Activated CD4-positive, alpha-beta T cell treated with anti-CD3 and anti-CD28 coated beads for 36 hours (primary cell): ENCODE measurements at regions of chr6 and their contacts with region 1.

Region 1: DNA sequence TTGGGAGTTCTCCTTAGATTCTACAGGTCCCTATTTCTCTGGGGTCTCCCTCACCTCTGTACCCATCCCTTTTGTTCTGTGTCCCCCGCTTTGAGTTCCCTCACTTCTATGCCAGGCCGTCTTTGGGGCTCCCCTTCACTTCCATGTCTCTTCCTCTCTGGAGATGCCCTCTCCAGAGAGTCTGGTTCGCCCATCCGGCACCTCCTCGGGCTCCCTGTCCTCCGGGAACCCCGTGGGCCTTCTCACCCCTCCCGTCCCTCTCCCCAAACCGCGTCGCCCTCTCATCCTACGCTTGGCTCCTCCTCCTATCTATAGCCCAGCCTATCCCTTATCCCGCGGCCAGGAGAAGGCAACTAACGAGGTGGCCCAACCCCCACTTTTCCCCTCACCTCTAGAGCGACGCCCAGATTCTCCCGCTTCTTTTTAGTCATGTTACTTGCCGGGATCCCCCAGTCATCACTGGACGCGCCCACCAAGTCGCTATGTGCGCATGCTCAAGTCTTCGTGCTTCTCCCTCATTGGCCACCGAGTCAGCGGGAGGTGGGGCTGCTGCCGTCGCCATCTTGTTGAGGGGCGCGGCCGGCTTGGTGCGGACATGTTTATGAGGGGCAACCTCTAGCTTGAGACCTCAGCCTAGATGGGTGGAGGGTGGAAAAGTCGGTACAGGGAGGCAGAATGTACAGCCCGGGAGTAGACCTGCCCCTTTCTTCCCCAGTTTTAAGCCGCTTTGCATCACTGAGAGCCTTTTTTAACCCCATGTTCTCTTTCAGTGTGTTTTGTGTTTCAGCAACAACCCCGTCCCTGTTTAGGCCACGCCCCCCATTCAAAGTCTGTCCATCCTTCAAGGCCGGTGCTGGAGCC is at the start of gene CCDC167:
- DNase-seq: peak; percentile 99
- ATAC-seq: peak; percentile 82
- H3K4me3 Mint-ChIP-seq: peak within 1 kb of the TSS; percentile 88
- H3K27ac Mint-ChIP-seq: peak within 1 kb of the TSS; percentile 96
- H3K4me1 Mint-ChIP-seq: peaks cover 89% of the 10 kb centered on the region
- H3K27me3 Mint-ChIP-seq: no peaks in the 10 kb centered on the region
- total RNA-seq, gene CCDC167: 55.3 to 60.3 TPM

Region 2: GRCh38 chr6:37029249-37029971 is 470.3 kb before region 1 on chr6:
- CTCF ChIA-PET with region 1: no interaction called
- POLR2A ChIA-PET with region 1: no interaction called
- intact Hi-C with region 1: loop called in 1 of 2 experiments (anchors 5 kb)
- DNase-seq: peak; percentile 68
- ATAC-seq: peak; percentile 17
- H3K4me3 Mint-ChIP-seq: no peak overlapping the region
- H3K27ac Mint-ChIP-seq: peak overlapping the region; percentile 60
- H3K4me1 Mint-ChIP-seq: peaks cover 54% of the 10 kb centered on the region
- H3K27me3 Mint-ChIP-seq: no peaks in the 10 kb centered on the region

Region 3: DNA sequence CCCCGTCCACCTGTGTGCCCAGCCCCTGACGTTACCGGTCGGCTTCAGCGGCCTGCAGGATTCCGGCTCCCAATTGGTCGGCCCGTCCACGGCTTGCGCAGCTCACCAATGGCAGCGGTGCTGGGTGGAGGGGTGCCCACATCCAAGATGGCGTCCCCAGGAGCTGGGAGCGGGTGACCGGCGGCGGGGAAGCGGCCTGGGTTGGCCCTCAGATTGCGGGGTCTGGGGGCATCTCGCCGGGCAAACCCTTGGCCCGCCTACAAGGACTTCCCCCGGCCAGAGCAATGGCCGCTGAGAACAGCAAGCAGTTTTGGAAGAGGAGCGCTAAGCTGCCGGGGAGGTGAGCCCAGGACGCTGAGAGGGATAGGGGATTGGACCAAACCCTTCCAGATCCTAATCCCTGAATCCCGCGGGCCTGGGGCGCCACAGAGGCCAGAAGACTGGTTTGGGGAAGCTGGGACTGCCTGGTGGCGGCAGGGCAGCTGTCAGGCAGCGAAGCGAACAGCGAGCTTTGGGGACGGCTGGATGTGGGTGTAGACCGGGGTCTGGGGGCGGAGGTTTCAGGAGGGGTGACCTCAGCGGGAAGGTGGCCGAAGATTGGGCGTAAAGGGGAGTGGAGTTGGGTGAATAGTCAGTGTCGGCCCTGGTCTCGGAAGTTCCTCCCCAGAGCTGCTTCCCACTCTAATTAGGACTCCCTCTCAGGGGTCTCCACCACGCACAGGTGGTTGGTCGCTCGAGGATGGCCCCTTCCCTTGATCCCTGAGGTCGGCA is 241.8 kb before region 1 on chr6 and contains the starts of genes TBC1D22B and TMEM217:
- CTCF ChIA-PET with region 1: no interaction called
- POLR2A ChIA-PET with region 1: no interaction called
- intact Hi-C with region 1: loop called in 1 of 2 experiments (anchors 1 kb)
- DNase-seq: peak; percentile 98
- ATAC-seq: peak; percentile 99
- H3K4me3 Mint-ChIP-seq: peak within 1 kb of the TSS; percentile 74
- H3K27ac Mint-ChIP-seq: peak within 1 kb of the TSS; percentile 94
- H3K4me1 Mint-ChIP-seq: peaks cover 45% of the 10 kb centered on the region
- H3K27me3 Mint-ChIP-seq: no peaks in the 10 kb centered on the region
- total RNA-seq, gene TBC1D22B: 14.9 to 17.0 TPM
- total RNA-seq, gene TMEM217: 2.5 TPM

Region 4: DNA sequence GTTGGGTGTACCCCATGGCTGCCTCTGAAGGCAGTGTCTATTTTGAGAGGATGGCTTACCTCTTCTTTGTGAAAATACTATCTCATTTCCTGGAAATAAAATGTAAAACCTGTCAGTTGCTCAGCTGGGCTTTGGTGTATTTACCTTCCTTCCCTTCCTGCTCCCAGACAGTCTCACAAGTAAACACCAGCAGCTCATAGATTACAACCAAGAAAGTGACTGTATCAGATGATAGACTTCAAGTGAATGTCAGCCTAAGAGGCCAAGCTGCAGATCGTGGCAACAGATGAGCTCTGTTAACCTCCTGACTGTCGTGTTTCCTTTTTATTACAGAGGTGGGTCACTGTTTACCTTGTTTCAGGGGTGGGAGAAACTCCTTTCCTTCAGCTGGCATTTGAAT is 108.5 kb before region 1 on chr6:
- CTCF ChIA-PET with region 1: no interaction called
- POLR2A ChIA-PET with region 1: no interaction called
- intact Hi-C with region 1: no loop called
- DNase-seq: no peak
- ATAC-seq: no peak
- H3K4me3 Mint-ChIP-seq: no peak overlapping the region
- H3K27ac Mint-ChIP-seq: no peak overlapping the region
- H3K4me1 Mint-ChIP-seq: no peaks in the 10 kb centered on the region
- H3K27me3 Mint-ChIP-seq: no peaks in the 10 kb centered on the region

Region 5: DNA sequence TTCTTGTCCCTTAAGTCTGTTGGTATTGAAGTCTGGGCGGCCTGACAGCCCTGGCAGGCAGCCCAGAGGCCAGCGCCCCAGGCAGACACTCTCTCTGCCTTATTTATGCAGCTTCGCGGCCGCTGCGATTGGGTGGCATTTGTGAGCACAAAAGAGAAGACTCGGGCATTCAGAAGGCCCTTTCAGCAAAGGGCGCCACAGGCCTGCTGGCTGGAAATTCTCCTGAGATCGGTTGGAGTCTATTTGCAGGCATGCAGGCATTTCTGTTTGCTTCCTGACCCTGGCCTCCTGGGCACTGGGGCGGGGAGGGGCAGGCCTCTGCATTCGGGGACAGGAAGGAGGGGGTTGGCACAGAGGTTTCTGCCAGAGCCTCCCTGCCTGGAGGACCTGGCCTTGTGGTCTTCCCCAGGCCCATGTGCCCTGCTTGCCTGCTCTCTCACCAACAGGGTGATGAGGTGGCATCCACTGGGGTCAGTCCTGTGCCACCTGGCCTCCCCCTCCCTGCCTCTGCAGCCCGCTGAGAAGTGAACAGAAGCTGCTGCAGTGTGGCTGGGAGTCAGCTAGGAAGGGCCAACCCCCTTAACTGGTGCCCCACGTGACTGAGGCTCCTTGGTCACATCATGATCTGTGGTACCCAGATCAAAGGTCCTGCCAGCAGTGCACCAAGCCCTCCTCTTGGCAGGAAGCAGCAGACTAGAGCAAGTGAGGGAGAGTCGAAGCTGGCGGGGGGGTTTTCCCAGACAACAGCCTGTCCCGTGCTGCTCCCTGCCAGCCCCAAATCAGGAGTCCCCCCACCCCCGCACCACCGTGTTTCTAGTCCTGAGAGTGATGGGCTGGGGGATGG is 16.6 kb after region 1 on chr6:
- CTCF ChIA-PET with region 1: interaction called, 21 read pairs
- POLR2A ChIA-PET with region 1: interaction called, 22 read pairs
- intact Hi-C with region 1: loop called (anchors 1 kb)
- DNase-seq: peak; percentile 95
- ATAC-seq: peak; percentile 78
- H3K4me3 Mint-ChIP-seq: peak overlapping the region; percentile 70
- H3K27ac Mint-ChIP-seq: peak overlapping the region; percentile 91
- H3K4me1 Mint-ChIP-seq: peaks cover 84% of the 10 kb centered on the region
- H3K27me3 Mint-ChIP-seq: no peaks in the 10 kb centered on the region

Region 6: DNA sequence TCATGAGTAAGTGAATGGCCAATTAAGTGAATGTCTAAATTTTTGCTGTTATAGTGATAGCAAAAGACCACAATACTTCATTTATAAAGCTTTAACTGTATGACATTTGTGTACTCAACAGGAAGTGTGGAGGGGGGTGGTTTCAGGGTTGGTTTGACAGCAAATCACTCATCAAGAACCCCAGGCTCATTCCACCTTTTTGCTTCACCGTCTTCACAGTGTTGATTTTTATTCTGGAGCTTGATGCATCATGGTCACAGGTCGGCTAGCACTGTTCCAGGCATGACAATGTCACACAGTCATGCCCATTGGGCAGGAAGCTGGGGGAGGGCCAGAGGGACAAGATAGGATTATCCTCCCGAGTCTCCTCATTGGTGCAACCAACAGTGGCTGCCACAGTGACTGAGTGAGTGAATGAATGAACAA is 123.0 kb after region 1 on chr6:
- CTCF ChIA-PET with region 1: no interaction called
- POLR2A ChIA-PET with region 1: no interaction called
- intact Hi-C with region 1: loop called in 1 of 2 experiments (anchors 2 kb)
- DNase-seq: peak; percentile 74
- ATAC-seq: peak; percentile 87
- H3K4me3 Mint-ChIP-seq: no peak overlapping the region
- H3K27ac Mint-ChIP-seq: peak overlapping the region; percentile 80
- H3K4me1 Mint-ChIP-seq: peaks cover 52% of the 10 kb centered on the region
- H3K27me3 Mint-ChIP-seq: peaks cover 9% of the 10 kb centered on the region

Region 7: GRCh38 chr6:37713529-37714119 is 214.0 kb after region 1 on chr6:
- CTCF ChIA-PET with region 1: no interaction called
- POLR2A ChIA-PET with region 1: no interaction called
- intact Hi-C with region 1: no loop called
- DNase-seq: no peak
- ATAC-seq: no peak
- H3K4me3 Mint-ChIP-seq: no peak overlapping the region
- H3K27ac Mint-ChIP-seq: no peak overlapping the region
- H3K4me1 Mint-ChIP-seq: peaks cover 2% of the 10 kb centered on the region
- H3K27me3 Mint-ChIP-seq: peaks cover 4% of the 10 kb centered on the region

Region 8: GRCh38 chr6:39114704-39115599 is 1615.3 kb after region 1 on chr6 and contains the start of gene SAYSD1:
- CTCF ChIA-PET with region 1: no interaction called
- POLR2A ChIA-PET with region 1: no interaction called
- intact Hi-C with region 1: loop called in 1 of 2 experiments (anchors 10 kb)
- DNase-seq: peak; percentile 96
- ATAC-seq: peak; percentile 77
- H3K4me3 Mint-ChIP-seq: peak within 1 kb of the TSS; percentile 85
- H3K27ac Mint-ChIP-seq: peak within 1 kb of the TSS; percentile 98
- H3K4me1 Mint-ChIP-seq: peaks cover 63% of the 10 kb centered on the region
- H3K27me3 Mint-ChIP-seq: no peaks in the 10 kb centered on the region
- total RNA-seq, gene SAYSD1: 14.1 to 16.7 TPM